Lower leg skin (tissue), 4 donors: ENCODE measurements at regions of chr7 and their contacts with region 1.

Region 1: DNA sequence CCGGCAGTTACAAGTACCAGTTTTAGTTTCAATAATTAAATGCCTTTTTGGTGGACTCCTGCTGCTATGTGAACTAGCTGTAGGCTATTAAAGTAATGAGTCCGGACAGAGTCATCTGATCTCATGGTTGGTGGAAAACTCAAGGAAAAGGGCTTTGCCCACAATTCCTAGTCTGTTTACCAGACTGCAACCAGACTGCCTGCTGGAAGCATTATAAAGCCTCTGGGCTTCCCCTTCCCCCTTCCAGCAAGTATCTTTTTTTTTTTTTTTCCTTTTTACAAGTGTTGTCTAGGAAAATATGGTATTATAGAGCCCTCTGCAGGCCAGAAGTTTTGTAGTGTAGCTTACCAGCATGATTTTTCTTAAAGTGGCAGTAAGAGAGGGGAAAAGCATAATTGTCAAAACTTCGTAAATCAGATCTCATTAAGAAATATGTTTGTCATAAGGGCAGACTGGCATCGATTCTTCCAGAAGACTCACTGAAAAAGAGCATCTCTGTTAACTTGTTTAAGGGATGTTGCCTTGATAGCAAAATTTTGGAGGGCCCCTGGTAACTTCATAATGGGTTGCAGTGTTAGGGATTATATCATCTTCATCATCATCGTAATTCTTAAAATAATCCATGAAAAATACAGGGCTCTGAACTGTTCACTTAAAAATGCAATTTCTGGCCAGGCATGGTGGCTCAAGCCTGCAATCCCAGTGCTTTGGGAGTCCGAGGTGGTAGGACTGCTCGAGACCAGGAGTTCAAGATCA is 181.3 kb downstream of the TAX1BP1 start:
- DNase-seq: peak in 1 of 2 donors; percentile 32
- H3K4me3 ChIP-seq: no peak overlapping the region
- CTCF ChIP-seq: no peak
- POLR2A ChIP-seq: no peak

Region 2: DNA sequence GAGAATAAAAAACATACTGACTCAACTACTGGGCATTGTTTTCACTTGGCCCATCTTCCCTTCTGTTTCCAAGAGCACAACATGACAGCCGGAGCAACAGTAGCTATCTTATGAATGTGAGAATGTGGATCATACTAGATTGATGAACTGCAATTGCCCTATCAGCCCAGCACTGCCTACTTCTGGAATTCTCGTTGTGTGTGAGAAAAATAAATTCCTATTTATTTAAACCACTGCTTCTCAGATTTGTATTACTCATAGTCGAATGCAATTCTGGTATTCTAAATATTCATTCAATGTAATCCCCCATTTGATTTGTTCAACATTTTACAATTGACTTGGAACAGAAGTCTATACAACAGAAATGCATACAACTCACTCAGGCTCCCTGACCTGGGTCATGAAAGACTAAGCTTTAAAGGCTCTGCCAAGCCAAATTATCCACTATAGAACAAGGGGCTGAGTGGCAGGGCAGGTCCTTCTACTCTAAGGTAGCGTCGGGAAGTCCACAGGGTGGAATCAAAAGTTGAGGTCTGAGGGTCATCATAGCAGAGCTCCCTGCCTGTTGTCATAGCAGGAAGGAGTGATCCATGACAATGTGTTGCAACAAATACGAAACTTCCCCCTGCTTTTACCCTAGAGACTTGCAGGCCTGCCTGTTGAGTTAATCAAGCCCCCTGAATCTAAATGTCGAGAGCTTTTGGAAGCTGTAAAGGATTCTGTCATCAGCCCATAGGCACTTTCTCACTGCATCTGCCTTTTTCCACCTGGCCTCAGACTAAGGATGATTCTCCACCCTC is 271.7 kb after region 1 on chr7:
- intact Hi-C with region 1: loop called (anchors 10 kb)
- DNase-seq: no peak
- H3K4me3 ChIP-seq: no peak overlapping the region
- CTCF ChIP-seq: no peak
- POLR2A ChIP-seq: no peak